ENCODE measurements at regions of chr6 and their contacts with region 1.

Region 1: DNA sequence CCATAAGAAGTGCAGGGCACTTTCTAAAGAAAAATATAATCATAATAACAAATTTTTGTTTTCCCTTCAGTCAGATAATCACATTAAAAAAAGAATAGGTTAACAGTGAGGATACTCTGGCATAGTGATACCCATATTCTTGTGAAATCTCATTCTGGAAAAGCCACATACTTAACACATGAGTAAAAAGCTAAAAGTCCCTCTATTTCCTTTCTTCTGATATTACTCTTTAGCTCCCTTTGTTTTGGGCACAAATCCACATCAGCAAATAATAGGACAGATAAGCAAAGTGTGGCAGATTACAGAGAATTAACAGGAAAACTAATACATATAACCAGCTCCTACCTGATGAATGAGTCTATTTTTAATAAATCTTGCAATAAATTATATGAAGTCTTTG is 15.8 kb downstream of the SHPRH start:
- DNase-seq: no peak
- H3K4me3 ChIP-seq: no peak overlapping the region
- H3K27ac ChIP-seq: no peak overlapping the region
- H3K4me1 ChIP-seq: no peaks in the 10 kb centered on the region
- H3K27me3 ChIP-seq: no peaks in the 10 kb centered on the region
- CTCF ChIP-seq: no peak
- POLR2A ChIP-seq: no peak

Region 2: DNA sequence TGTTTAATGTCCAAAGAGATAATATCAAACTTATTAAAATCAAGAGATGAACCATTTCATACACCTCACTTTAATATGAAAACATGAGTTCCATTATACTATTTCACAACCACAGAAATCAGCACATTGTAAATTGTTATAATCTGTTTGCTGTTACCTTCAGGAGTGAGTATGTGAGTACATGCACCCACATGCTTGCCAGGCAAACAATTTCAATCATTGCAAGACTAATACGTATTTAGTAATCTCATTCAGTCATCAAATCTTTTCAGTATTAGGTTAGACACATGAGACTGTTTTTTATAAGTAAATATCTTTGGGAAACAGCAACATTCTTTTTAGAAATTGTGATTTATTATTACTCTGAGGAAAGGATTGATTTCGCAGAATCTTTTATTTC is 203.7 kb before region 1 on chr6:
- intact Hi-C with region 1: loop called (anchors 5 kb)
- DNase-seq: no peak
- H3K4me3 ChIP-seq: no peak overlapping the region
- H3K27ac ChIP-seq: no peak overlapping the region
- H3K4me1 ChIP-seq: no peaks in the 10 kb centered on the region
- H3K27me3 ChIP-seq: no peaks in the 10 kb centered on the region
- CTCF ChIP-seq: no peak
- POLR2A ChIP-seq: no peak

Region 3: DNA sequence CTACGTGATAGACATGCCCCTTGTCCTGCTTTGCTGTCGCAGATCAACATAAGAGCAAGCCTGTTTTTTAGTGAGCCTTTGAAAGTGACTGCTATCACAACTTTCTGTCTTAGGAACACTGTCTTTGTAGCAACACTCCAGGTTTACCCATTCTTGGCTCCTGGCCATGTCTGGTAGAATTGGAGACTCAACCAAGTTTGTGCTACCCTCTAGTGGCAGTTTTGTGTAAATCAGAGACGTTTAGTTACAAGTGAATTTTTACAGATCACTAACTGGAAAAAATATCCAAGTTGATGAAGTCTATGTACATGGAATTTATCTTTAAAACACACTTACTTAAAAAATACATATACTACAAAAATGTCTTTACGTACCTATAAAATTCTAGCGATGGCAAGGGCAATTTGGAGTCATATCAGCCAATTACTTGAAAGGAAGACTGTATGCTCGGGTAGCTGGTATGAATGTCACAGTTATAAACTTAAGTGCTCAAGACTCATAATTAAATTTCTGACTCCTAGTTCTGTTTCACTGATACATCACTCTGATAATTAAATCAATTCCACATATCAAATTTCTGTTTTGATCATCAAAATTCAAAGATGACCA is 751.9 kb after region 1 on chr6:
- intact Hi-C with region 1: loop called (anchors 10 kb)
- DNase-seq: peak; percentile 85 to 87
- H3K4me3 ChIP-seq: no peak overlapping the region
- H3K27ac ChIP-seq: no peak overlapping the region
- H3K4me1 ChIP-seq: no peaks in the 10 kb centered on the region
- H3K27me3 ChIP-seq: no peaks in the 10 kb centered on the region
- CTCF ChIP-seq: peak; percentile 16 to 88 (median 78)
- POLR2A ChIP-seq: no peak